PC-9 (cell line): ENCODE measurements at regions of chr19 and their contacts with region 1.

Region 1: GRCh38 chr19:34793565-34793964 is 20.6 kb upstream of the ZNF599 start:
- DNase-seq: no peak
- H3K4me3 ChIP-seq: peak overlapping the region; percentile 9; the same call in 1 of the 2 replicates
- H3K27ac ChIP-seq: no peak overlapping the region
- H3K4me1 ChIP-seq: no peaks in the 10 kb centered on the region
- H3K27me3 ChIP-seq: peaks cover 25% of the 10 kb centered on the region
- CTCF ChIP-seq: no peak

Region 2: DNA sequence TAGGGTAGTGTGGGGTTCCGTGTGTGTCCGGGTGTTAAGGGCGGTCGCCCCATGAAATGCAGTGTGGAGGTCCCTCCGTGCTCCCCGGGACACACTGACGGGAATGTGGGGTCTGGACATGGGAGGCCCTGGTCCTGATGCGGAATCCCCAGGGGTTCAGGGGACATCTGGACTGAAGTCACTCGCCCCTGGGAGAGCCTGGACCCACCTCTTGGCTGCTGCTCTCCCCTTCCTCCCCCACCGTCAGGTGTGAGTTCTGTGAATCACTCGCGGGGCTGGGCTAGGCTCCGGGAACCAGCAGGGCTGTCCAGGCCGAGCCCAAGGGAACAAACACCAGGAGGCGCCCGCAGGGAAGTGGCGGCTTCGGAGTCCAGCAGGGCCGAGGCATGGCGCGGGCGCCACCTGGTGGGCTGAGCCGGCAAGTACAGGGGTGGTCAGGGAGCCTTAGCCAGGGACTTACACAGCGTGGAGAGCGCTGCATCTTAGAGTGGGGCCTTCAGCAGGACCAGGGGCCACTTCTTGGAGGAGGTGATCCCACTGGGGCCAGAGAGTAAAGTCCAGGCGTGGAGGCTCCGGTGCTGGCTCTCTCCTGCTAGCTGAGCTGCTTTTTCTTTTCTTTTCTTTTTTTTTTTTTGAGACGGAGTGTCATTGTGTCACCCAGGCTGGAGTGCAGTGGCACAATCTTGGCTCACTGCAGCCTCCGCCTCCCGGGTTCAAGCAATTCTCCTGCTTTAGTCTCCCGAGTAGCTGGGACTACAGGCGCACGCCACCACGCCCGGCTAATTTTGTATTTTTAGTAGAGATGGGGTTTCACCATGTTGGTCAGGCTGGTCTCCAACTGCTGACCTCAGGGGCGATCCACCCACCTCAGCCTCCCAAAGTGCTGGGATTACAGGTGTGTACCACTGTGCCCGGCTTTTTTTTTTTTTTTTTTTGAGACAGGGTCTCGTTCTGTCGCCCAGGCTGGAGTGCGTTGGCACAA is 291.9 kb before region 1 on chr19:
- CTCF ChIA-PET with region 1: no interaction called
- POLR2A ChIA-PET with region 1: no interaction called
- intact Hi-C with region 1: no loop called
- DNase-seq: peak; percentile 74 to 90
- H3K4me3 ChIP-seq: no peak overlapping the region
- H3K27ac ChIP-seq: no peak overlapping the region
- H3K4me1 ChIP-seq: no peaks in the 10 kb centered on the region
- H3K27me3 ChIP-seq: no peaks in the 10 kb centered on the region
- CTCF ChIP-seq: peak; percentile 96

Region 3: DNA sequence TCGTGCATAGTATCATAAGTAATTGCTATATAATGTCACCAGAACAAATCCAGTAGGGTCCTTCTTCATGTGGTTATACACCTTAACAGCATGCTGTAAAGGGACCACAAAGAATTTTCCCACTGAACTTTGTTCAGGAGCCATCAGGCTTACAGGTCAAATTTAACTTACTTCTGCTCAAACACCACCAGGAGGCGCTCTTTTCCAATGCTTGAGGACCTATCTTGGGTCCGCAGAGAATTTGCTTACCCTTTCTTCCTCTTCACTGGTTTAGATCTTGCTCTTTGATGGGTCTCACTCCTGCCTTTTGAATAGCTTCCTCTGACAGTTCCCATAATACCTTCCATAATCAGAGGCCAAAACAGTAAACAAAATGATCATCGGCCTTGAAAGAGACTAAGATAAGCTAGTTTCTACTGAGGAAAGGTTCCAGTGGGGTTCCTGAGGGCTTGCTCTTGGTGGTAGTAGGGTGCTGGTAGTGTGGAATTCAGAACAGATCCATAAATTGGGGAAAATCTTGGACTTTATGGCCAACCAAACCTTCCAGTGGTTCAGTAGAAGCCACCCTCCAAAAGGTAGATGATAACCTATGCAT is 154.0 kb before region 1 on chr19:
- CTCF ChIA-PET with region 1: no interaction called
- POLR2A ChIA-PET with region 1: no interaction called
- intact Hi-C with region 1: no loop called
- DNase-seq: peak in 1 of 2 experiments; percentile 18
- H3K4me3 ChIP-seq: no peak overlapping the region
- H3K27ac ChIP-seq: no peak overlapping the region
- H3K4me1 ChIP-seq: no peaks in the 10 kb centered on the region
- H3K27me3 ChIP-seq: no peaks in the 10 kb centered on the region
- CTCF ChIP-seq: peak; percentile 77

Region 4: DNA sequence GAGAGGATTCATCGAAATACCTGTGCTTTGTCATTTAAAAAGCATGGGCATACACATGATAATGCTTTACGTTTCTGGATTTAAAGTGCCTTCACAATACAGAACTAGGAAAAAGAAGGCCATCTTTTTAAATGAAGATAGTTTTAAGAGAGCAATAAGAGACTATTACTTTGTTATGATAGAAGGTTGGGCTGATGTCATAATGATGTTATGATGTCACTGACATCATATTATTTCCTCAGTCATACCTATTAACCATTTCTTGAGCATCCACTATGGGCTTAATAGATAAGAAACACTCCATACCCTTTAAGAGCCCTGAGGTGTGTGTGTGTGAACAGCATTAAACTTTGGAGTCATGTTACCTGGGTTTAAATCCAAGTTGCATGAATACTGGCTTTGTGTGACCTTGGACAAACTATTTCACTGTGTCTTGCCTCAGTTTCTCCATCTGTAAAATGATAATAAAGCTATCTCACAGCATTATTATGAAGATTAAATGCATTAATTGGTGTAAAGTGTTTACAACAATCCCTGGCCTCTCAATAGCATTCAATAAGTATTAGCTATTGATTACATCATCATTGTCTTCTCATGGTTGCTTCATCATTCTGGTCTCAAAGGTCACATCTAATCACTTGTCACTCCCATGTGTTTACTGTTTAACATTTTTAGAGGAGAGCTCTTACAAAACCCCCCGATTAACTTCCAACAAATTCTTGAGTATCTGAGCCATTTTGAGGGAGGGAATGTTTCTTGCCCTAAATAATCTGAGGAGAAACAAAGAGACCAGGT is 48.5 kb before region 1 on chr19:
- CTCF ChIA-PET with region 1: no interaction called
- POLR2A ChIA-PET with region 1: interaction called, 11 read pairs
- intact Hi-C with region 1: no loop called
- DNase-seq: no peak
- H3K4me3 ChIP-seq: no peak overlapping the region
- H3K27ac ChIP-seq: no peak overlapping the region
- H3K4me1 ChIP-seq: no peaks in the 10 kb centered on the region
- H3K27me3 ChIP-seq: no peaks in the 10 kb centered on the region
- CTCF ChIP-seq: no peak